ENCODE measurements at regions of chr7 and their contacts with region 1.

Region 1: DNA sequence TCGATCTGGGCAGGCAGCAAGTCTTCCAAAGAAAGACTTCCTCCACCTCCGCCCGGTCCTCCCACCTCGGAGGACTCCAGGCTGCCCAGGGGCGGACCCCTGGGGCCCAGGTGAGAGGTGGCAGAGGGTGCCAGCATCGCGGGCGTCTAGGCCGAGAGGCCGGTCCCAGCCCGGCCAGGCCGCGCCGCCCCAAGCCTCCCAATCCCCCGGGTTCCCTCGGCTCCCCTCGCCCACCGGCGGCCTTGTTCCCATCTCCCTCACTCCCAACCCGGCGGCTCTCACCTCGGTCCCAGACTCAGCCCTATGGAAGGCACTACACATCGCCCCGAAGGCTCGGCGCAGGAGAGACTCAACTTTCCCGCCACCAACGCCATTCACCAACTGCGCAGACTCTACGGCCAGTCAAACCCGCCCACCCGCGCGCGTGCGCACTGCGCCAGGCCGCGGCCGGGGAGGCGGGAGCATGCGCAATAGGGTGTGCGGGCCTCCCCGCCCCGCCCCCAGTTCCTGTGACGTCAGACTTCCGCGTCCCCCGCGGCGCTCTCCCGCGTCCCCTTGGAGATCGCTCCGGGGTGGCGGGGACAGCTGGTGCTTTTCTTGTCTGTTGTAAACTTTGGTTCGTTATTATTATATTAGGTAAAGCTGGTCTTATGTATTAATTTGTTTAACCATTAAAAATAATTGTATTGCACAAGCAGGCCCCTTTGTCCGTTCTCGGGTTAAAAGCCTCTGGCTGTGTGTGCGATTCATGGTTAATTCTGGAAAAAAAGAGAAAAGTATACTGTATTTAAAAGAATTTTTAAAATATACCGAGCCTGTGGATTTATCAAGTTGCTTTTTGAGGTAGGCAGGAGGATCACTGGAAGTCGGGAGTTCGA is at the start of gene XRCC2:
- DNase-seq: peak; percentile 98 to 99
- ATAC-seq: peak; percentile 91 to 96 (median 93)
- H3K4me3 ChIP-seq: peak within 1 kb of the TSS; percentile 61
- H3K4me3 Mint-ChIP-seq: peak within 1 kb of the TSS; percentile 96
- H3K27ac ChIP-seq: peak within 1 kb of the TSS; percentile 80
- H3K27ac Mint-ChIP-seq: peak within 1 kb of the TSS; percentile 93 to 94
- H3K4me1 ChIP-seq: peaks cover 9% of the 10 kb centered on the region
- H3K4me1 Mint-ChIP-seq: peaks cover 6 to 14% of the 10 kb centered on the region in 2 donors
- H3K27me3 ChIP-seq: no peaks in the 10 kb centered on the region
- H3K27me3 Mint-ChIP-seq: no peaks in the 10 kb centered on the region
- CTCF ChIP-seq: no peak
- total RNA-seq, gene XRCC2: 1.0 to 1.3 (median 1.2) TPM

Region 2: GRCh38 chr7:152463709-152464311 is 212.2 kb before region 1 on chr7:
- intact Hi-C with region 1: loop called (anchors 5 kb)
- DNase-seq: peak; percentile 100
- ATAC-seq: peak; percentile 88 to 97 (median 90)
- H3K4me3 ChIP-seq: peak overlapping the region; percentile 90
- H3K4me3 Mint-ChIP-seq: peak overlapping the region; percentile 93
- H3K27ac ChIP-seq: peak overlapping the region; percentile 92
- H3K27ac Mint-ChIP-seq: peak overlapping the region; percentile 88 to 91
- H3K4me1 ChIP-seq: peaks cover 21% of the 10 kb centered on the region
- H3K4me1 Mint-ChIP-seq: peaks cover 7 to 21% of the 10 kb centered on the region in 2 donors
- H3K27me3 ChIP-seq: no peaks in the 10 kb centered on the region
- H3K27me3 Mint-ChIP-seq: no peaks in the 10 kb centered on the region
- CTCF ChIP-seq: no peak

Region 3: GRCh38 chr7:152759949-152760853 is 84.2 kb after region 1 on chr7:
- intact Hi-C with region 1: loop called (anchors 5 kb)
- DNase-seq: peak in 1 of 2 donors; percentile 53
- ATAC-seq: peak; percentile 10 to 30 (median 27)
- H3K4me3 ChIP-seq: peak overlapping the region; percentile 70
- H3K4me3 Mint-ChIP-seq: peak overlapping the region; percentile 85
- H3K27ac ChIP-seq: peak overlapping the region; percentile 55
- H3K27ac Mint-ChIP-seq: peak overlapping the region; percentile 41 to 89
- H3K4me1 ChIP-seq: peaks cover 9% of the 10 kb centered on the region
- H3K4me1 Mint-ChIP-seq: peaks cover 8 to 15% of the 10 kb centered on the region in 2 donors
- H3K27me3 ChIP-seq: no peaks in the 10 kb centered on the region
- H3K27me3 Mint-ChIP-seq: peaks cover 2 to 7% of the 10 kb centered on the region in 2 donors
- CTCF ChIP-seq: no peak